T-cell (primary cell): ENCODE measurements at regions of chr2 and their contacts with region 1.

Region 1: GRCh38 chr2:27050281-27050995 is 1.0 kb upstream of the AGBL5 start:
- DNase-seq: peak; percentile 80 to 97 (median 89)
- ATAC-seq: peak; percentile 65 to 66 (median 66)
- H3K4me3 ChIP-seq: peak overlapping the region; percentile 89 to 91
- H3K4me3 Mint-ChIP-seq: peak overlapping the region; percentile 90 to 97 (median 93)
- H3K27ac ChIP-seq: peak overlapping the region; percentile 77
- H3K27ac Mint-ChIP-seq: peak overlapping the region; percentile 99
- H3K4me1 ChIP-seq: peaks cover 3 to 19% of the 10 kb centered on the region in 2 experiments
- H3K4me1 Mint-ChIP-seq: peaks cover 18 to 36% (median 20%) of the 10 kb centered on the region in 3 donors
- H3K27me3 ChIP-seq: no peaks in the 10 kb centered on the region
- H3K27me3 Mint-ChIP-seq: peaks cover 9 to 10% of the 10 kb centered on the region in 2 donors

Region 2: GRCh38 chr2:27071277-27071989 is 21.0 kb after region 1 on chr2 and contains the start of gene OST4:
- CTCF ChIA-PET with region 1: interaction called in 1 of 2 experiments, 8 read pairs
- POLR2A ChIA-PET with region 1: interaction called, 3 to 12 read pairs
- DNase-seq: peak; percentile 76 to 93 (median 83)
- ATAC-seq: peak; percentile 91 to 96 (median 94)
- H3K4me3 ChIP-seq: peak within 1 kb of the TSS; percentile 91 to 93
- H3K4me3 Mint-ChIP-seq: peak within 1 kb of the TSS; percentile 89 to 96 (median 96)
- H3K27ac ChIP-seq: peak within 1 kb of the TSS; percentile 78
- H3K27ac Mint-ChIP-seq: peak within 1 kb of the TSS; percentile 96
- H3K4me1 ChIP-seq: peaks cover 22 to 62% of the 10 kb centered on the region in 2 experiments
- H3K4me1 Mint-ChIP-seq: peaks cover 68 to 80% (median 76%) of the 10 kb centered on the region in 3 donors
- H3K27me3 ChIP-seq: no peaks in the 10 kb centered on the region
- H3K27me3 Mint-ChIP-seq: no peaks in the 10 kb centered on the region
- total RNA-seq, gene OST4: 217 to 292 (median 236) TPM

Region 3: DNA sequence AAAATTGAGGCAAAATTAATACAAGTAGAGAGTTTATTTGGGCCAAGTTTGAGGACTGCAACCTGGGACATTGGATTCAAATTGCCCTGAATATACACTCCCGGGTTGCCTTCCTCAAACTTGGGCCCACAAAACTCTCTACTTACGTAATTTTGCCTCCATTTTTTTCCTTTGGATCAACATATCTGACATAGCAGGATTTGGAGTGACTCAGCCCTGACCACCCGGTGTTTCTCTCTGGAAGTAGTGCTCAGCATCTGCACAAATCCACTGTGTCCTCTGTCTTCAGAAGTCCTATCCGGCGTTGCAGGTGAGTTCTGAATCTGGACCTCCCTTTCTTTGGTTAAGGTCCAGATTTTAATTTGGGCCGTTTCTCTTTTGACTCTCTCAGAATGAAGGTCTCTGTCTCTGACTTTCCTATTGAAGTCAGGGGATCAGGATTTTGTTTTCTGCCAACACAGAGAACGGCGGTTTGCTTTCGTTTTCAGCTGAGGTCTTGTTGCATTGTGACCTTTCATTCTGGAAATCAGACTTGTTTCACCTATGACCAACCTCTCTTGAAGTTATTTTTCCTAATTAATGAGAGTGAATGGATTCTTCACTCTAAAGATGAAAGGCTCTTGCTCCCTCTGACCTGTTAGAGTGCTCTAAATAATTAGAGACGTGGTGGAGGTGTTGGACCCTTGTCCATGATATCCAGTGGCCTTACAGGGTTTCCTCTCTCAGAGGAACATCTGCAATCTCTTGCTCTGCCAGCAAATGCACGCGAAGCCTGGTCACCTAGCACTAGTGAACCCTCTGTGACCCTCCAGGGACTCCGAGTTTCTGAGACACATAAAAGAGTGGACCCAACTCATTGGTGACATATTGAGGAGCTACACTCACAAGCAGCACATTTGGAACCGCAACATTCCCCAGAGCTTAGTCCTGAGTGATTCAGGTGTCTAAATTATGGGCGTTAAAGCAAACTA is 112.0 kb after region 1 on chr2:
- CTCF ChIA-PET with region 1: no interaction called
- POLR2A ChIA-PET with region 1: no interaction called
- DNase-seq: no peak
- ATAC-seq: no peak
- H3K4me3 ChIP-seq: no peak overlapping the region
- H3K4me3 Mint-ChIP-seq: no peak overlapping the region
- H3K27ac ChIP-seq: no peak overlapping the region
- H3K27ac Mint-ChIP-seq: no peak overlapping the region
- H3K4me1 ChIP-seq: no peaks in the 10 kb centered on the region
- H3K4me1 Mint-ChIP-seq: no peaks in the 10 kb centered on the region
- H3K27me3 ChIP-seq: peaks cover 0 to 2% of the 10 kb centered on the region in 2 experiments
- H3K27me3 Mint-ChIP-seq: peaks cover 0 to 8% of the 10 kb centered on the region in 2 donors